Mammary epithelial cell (primary cell): ENCODE measurements at regions of chr13 and their contacts with region 1.

Region 1: GRCh38 chr13:27257648-27258253 is 6.4 kb downstream of the RPL21 start:
- DNase-seq: no peak
- H3K4me3 ChIP-seq: no peak overlapping the region
- H3K27ac ChIP-seq: no peak overlapping the region
- H3K4me1 ChIP-seq: peaks cover 15% of the 10 kb centered on the region
- H3K27me3 ChIP-seq: no peaks in the 10 kb centered on the region
- CTCF ChIP-seq: no peak

Region 2: GRCh38 chr13:26985285-26985878 is 272.4 kb before region 1 on chr13:
- CTCF ChIA-PET with region 1: no interaction called
- dilution Hi-C with region 1: no loop called
- in situ Hi-C with region 1: no loop called
- intact Hi-C with region 1: no loop called
- DNase-seq: peak; percentile 62
- H3K4me3 ChIP-seq: no peak overlapping the region
- H3K27ac ChIP-seq: no peak overlapping the region
- H3K4me1 ChIP-seq: no peaks in the 10 kb centered on the region
- H3K27me3 ChIP-seq: peaks cover 3% of the 10 kb centered on the region
- CTCF ChIP-seq: peak; percentile 70 to 72

Region 3: DNA sequence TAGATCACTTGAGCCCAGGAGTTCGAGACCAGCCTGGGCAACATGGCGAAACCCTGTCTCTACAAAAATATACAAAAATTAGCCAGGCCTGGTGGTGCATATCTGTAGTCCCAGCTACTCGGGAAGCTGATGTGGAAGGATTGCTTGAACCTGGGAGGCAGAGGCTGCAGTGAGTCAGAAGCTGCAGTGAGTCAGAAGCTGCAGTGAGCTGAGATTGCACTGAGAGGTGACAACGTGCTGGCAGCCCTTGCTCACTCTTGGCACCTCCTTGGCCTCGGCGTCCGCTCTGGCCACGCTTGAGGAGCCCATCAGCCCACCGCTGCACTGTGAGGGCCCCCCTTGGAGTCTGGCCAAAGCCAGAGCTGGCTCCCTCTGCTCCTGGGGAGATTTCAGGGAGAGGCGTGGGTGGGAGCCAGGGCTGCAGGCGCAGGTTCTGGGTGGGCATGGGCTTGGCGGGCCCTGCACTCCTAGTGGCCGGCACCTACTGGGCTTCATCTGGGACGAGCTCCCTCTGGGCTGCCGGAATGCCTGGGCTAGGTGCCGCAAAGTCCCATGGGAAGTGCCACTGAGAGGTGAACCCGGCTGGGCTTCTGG is 45.9 kb before region 1 on chr13:
- CTCF ChIA-PET with region 1: no interaction called
- dilution Hi-C with region 1: no loop called
- in situ Hi-C with region 1: no loop called
- intact Hi-C with region 1: no loop called
- DNase-seq: peak; percentile 58
- H3K4me3 ChIP-seq: no peak overlapping the region
- H3K27ac ChIP-seq: no peak overlapping the region
- H3K4me1 ChIP-seq: peaks cover 4% of the 10 kb centered on the region
- H3K27me3 ChIP-seq: no peaks in the 10 kb centered on the region
- CTCF ChIP-seq: no peak

Region 4: GRCh38 chr13:27281420-27281819 is 23.7 kb after region 1 on chr13:
- CTCF ChIA-PET with region 1: interaction called, 10 read pairs
- dilution Hi-C with region 1: no loop called
- in situ Hi-C with region 1: no loop called
- intact Hi-C with region 1: no loop called
- DNase-seq: no peak
- H3K4me3 ChIP-seq: no peak overlapping the region
- H3K27ac ChIP-seq: no peak overlapping the region
- H3K4me1 ChIP-seq: no peaks in the 10 kb centered on the region
- H3K27me3 ChIP-seq: no peaks in the 10 kb centered on the region
- CTCF ChIP-seq: no peak

Region 5: DNA sequence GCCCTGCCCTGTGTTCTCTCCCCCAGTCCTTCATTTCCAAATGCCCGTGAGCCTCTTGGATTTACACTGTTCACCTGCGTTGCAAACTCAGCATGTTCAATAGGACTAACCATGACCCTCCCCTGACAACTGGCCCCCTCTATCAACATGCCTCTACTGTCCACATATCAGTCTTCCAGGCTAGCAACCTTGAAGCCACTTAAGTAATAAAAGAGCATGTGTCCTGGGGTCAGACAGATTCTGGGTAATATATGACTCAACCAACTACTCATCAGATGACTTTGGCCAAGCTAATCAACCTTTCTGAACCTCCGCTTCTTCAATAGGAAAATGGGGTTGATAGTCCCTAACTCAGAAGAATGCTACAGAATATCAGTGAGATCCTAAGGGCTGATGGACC is 647.0 kb after region 1 on chr13:
- CTCF ChIA-PET with region 1: no interaction called
- dilution Hi-C with region 1: no loop called
- in situ Hi-C with region 1: no loop called
- intact Hi-C with region 1: no loop called
- DNase-seq: no peak
- H3K4me3 ChIP-seq: no peak overlapping the region
- H3K27ac ChIP-seq: no peak overlapping the region
- H3K4me1 ChIP-seq: no peaks in the 10 kb centered on the region
- H3K27me3 ChIP-seq: peaks cover 9% of the 10 kb centered on the region
- CTCF ChIP-seq: no peak